CD8-positive, alpha-beta T cell (primary cell): ENCODE measurements at regions of chr2 and their contacts with region 1.

Region 1: GRCh38 chr2:136378712-136379595 is 261.0 kb upstream of the CXCR4 start:
- DNase-seq: peak; percentile 57 to 88 (median 81)
- ATAC-seq: peak; percentile 40
- H3K4me3 ChIP-seq: no peak overlapping the region
- H3K4me3 Mint-ChIP-seq: no peak overlapping the region
- H3K27ac ChIP-seq: no peak overlapping the region
- H3K27ac Mint-ChIP-seq: peak overlapping the region; percentile 72
- H3K4me1 ChIP-seq: peaks cover 46% of the 10 kb centered on the region
- H3K4me1 Mint-ChIP-seq: peaks cover 71% of the 10 kb centered on the region
- H3K27me3 ChIP-seq: no peaks in the 10 kb centered on the region
- H3K27me3 Mint-ChIP-seq: no peaks in the 10 kb centered on the region
- CTCF ChIP-seq: peak; percentile 86

Region 2: DNA sequence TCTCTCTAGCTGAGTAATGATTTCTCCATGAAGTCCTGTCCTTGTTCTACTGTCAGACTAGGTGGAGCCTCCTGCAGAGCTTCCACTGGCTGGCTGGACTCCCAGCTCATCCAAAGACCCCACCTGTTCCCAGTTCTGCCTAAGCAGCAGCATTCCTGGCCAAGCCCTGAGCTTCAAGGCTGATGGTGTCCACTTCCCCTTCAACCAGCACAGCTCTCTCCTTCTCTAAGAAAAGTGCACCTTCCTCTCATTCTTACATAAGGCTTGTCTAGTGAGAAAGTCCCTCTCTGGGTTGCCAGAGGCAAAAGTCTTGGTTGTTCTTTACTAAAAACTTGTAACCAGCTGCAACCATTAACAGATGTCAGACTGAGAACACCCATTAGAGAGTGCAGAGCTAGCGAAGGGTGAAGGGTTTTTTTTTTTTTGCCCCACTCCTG is 319.9 kb before region 1 on chr2:
- CTCF ChIA-PET with region 1: interaction called, 4 read pairs
- POLR2A ChIA-PET with region 1: interaction called, 4 read pairs
- intact Hi-C with region 1: loop called in 1 of 2 experiments (anchors 5 kb)
- DNase-seq: no peak
- ATAC-seq: no peak
- H3K4me3 ChIP-seq: no peak overlapping the region
- H3K4me3 Mint-ChIP-seq: no peak overlapping the region
- H3K27ac ChIP-seq: no peak overlapping the region
- H3K27ac Mint-ChIP-seq: no peak overlapping the region
- H3K4me1 ChIP-seq: peaks cover 37% of the 10 kb centered on the region
- H3K4me1 Mint-ChIP-seq: peaks cover 57% of the 10 kb centered on the region
- H3K27me3 ChIP-seq: no peaks in the 10 kb centered on the region
- H3K27me3 Mint-ChIP-seq: no peaks in the 10 kb centered on the region
- CTCF ChIP-seq: no peak

Region 3: DNA sequence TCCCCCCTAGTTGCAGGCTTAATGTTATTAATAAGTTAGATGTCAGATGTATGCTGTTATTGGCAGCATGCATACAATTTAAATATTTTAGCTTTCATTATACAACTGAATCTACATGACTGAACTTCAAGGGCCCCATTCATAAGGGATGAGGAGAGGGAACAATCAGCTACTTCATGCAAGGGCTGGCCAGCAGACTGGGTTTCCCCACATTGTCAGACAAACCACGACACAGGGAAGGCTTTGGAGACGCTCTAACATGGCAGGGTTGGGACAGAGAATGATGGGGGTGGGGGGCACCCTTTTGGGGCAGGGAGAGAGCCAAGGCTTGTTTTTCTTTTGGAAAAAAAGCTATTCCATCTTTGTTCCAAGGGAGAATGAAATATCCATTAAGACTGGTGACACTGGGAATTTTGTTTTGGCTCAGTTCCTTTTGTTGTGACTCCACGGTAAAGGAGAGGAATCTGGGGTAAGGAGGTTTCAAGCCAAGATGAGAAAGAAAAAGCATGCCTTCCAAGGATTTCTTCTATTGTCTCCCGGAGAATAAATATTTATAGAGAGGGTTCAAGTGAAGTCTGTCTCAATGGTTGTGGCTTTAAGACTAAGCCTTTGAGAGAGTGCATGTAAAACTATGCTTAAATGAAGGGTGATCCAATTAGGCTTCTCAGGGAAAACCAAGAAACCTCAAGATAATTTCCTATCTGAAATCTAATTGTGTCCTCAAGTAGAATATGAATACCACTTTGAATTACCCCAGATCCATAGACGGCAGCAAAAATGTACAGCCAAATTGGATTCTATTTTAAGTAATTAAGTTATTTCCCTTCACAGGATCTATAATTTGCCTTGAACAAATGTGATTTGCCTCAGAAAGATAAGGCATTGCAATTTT is 266.4 kb before region 1 on chr2:
- CTCF ChIA-PET with region 1: interaction called, 5 read pairs
- POLR2A ChIA-PET with region 1: interaction called, 4 read pairs
- intact Hi-C with region 1: loop called in 1 of 2 experiments (anchors 2 kb)
- DNase-seq: peak in 3 of 9 experiments; percentile 58 to 71 (median 69)
- ATAC-seq: no peak
- H3K4me3 ChIP-seq: no peak overlapping the region
- H3K4me3 Mint-ChIP-seq: no peak overlapping the region
- H3K27ac ChIP-seq: no peak overlapping the region
- H3K27ac Mint-ChIP-seq: peak overlapping the region; percentile 66
- H3K4me1 ChIP-seq: peaks cover 34% of the 10 kb centered on the region
- H3K4me1 Mint-ChIP-seq: peaks cover 35% of the 10 kb centered on the region
- H3K27me3 ChIP-seq: no peaks in the 10 kb centered on the region
- H3K27me3 Mint-ChIP-seq: no peaks in the 10 kb centered on the region
- CTCF ChIP-seq: no peak

Region 4: DNA sequence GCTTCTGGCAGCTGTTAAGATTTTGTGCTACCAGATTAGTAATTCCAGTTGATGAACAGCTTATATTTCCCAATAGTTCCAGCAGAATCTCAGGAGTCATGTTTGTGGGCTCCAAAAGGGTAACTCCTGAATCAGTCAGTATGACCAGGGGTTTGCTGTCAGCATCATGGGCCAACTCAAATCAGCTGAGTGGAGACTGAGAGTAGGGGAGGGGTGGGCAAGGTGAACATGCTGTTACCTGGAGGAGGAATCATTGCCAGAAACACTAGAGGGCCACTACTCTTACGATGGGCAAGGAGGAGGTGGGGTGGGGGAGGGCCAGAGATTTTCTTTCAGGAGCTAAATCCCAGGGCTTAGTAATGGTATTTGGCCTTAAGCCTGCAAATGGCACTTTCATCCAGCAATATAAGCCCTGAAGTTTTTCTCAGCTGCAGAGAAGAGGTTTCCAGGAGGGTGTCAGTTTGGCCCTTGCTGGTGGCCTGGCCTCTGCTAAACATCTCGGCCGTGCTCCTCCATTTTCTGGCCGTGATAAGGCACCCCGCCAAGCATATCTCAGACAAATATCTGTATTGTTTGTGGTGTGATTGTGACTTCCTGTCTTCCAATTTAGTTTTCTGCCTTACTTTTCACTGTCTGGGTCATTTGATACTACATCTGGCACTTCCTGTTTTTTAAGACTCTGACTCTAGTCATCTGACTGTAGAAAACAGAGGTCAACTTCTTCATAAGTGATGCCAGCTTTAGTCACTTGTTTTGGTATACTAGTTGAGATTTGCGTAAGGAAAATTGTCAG is 140.5 kb before region 1 on chr2:
- CTCF ChIA-PET with region 1: interaction called, 6 read pairs
- POLR2A ChIA-PET with region 1: interaction called, 3 read pairs
- intact Hi-C with region 1: loop called (anchors 5 kb)
- DNase-seq: peak; percentile 29 to 89 (median 65)
- ATAC-seq: peak; percentile 75
- H3K4me3 ChIP-seq: peak overlapping the region in 1 of 2 experiments; percentile 13
- H3K4me3 Mint-ChIP-seq: peak overlapping the region; percentile 30
- H3K27ac ChIP-seq: peak overlapping the region; percentile 64 to 83
- H3K27ac Mint-ChIP-seq: peak overlapping the region; percentile 91
- H3K4me1 ChIP-seq: peaks cover 31% of the 10 kb centered on the region
- H3K4me1 Mint-ChIP-seq: peaks cover 56% of the 10 kb centered on the region
- H3K27me3 ChIP-seq: no peaks in the 10 kb centered on the region
- H3K27me3 Mint-ChIP-seq: no peaks in the 10 kb centered on the region
- CTCF ChIP-seq: no peak

Region 5: GRCh38 chr2:136255648-136256463 is 123.1 kb before region 1 on chr2:
- CTCF ChIA-PET with region 1: interaction called, 3 read pairs
- POLR2A ChIA-PET with region 1: no interaction called
- intact Hi-C with region 1: loop called (anchors 2 to 5 kb)
- DNase-seq: peak in 4 of 9 experiments; percentile 34 to 57 (median 41)
- ATAC-seq: peak; percentile 77
- H3K4me3 ChIP-seq: no peak overlapping the region
- H3K4me3 Mint-ChIP-seq: no peak overlapping the region
- H3K27ac ChIP-seq: no peak overlapping the region
- H3K27ac Mint-ChIP-seq: peak overlapping the region; percentile 72
- H3K4me1 ChIP-seq: no peaks in the 10 kb centered on the region
- H3K4me1 Mint-ChIP-seq: peaks cover 28% of the 10 kb centered on the region
- H3K27me3 ChIP-seq: no peaks in the 10 kb centered on the region
- H3K27me3 Mint-ChIP-seq: no peaks in the 10 kb centered on the region
- CTCF ChIP-seq: no peak

Region 6: DNA sequence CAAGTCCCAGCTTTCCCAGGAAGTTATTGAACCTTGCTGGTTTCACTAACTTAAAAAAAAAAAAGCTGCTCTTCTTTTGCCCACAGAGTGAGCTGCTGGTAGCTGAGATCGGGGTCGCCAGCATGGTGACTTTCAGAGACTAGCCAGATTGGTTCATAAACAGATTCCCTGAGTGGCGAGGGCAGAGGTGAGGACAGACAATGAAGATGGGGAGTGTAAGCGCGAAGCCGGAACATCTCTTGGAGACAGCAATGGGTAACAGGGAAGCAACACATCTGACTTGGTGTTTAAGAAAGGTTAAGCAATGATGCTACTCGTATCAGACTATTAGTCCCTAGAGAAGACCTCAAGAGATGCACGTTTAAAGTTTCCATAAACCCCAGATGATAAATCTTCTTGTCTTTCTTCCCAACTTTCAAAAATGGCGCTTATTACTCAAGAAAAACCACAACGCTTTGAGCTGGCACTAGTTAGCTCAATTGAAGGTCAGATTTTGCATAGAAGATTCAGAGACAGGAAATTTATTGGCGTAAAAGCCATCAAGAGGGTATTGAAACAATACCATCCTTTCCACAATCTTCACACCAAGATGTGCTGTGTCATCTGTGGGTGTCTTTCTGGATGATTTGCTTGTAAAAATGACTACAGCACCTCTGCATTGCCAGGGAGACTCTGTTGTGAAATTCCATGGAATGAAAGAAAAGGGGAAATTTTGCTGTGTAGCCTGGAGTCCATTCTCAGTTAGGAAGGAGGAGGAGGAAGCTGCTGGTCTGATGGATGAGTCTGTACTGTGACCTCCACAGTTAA is 68.0 kb before region 1 on chr2:
- CTCF ChIA-PET with region 1: no interaction called
- POLR2A ChIA-PET with region 1: no interaction called
- intact Hi-C with region 1: no loop called
- DNase-seq: peak in 2 of 9 experiments; percentile 30 to 53
- ATAC-seq: peak; percentile 75
- H3K4me3 ChIP-seq: no peak overlapping the region
- H3K4me3 Mint-ChIP-seq: no peak overlapping the region
- H3K27ac ChIP-seq: no peak overlapping the region
- H3K27ac Mint-ChIP-seq: peak overlapping the region; percentile 80
- H3K4me1 ChIP-seq: peaks cover 5% of the 10 kb centered on the region
- H3K4me1 Mint-ChIP-seq: peaks cover 15% of the 10 kb centered on the region
- H3K27me3 ChIP-seq: no peaks in the 10 kb centered on the region
- H3K27me3 Mint-ChIP-seq: no peaks in the 10 kb centered on the region
- CTCF ChIP-seq: no peak